ENCODE measurements at regions of chr5 and their contacts with region 1.

Region 1: GRCh38 chr5:126676195-126676624 is 75.5 kb downstream of the PHAX start:
- DNase-seq: no peak
- H3K4me3 ChIP-seq: no peak overlapping the region
- CTCF ChIP-seq: peak; percentile 67

Region 2: DNA sequence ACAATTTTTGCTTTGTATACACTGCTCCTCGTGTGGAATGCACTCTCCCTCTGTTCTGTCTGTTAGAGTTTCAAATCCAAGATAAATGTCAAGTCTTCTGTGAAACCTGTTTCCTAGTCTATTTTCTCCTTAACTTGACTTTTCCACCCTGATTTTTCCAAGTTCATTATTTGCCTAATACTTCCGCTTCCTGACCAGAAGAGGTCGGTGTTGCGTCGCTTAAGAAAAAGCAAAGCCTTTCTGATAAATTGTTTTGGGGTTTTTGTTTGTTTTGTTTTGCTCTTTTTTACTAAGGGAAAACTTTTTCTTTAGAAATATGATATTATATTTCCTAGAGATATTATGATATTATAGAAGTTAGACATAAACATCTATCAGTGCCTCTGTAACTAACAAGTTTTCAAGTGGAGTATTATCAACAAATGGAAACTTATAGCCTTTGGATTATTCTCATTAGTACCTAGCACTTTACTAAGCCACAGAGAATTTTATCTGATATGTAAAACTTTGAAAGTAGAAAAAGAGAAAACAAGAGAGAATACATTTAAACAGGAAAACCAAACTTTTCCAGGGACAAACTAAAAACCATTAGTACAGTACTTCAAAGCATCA is 19.7 kb before region 1 on chr5:
- CTCF ChIA-PET with region 1: interaction called, 47 read pairs
- POLR2A ChIA-PET with region 1: no interaction called
- DNase-seq: no peak
- H3K4me3 ChIP-seq: no peak overlapping the region
- CTCF ChIP-seq: peak; percentile 66

Region 3: GRCh38 chr5:126664586-126664985 is 11.6 kb before region 1 on chr5:
- CTCF ChIA-PET with region 1: interaction called, 47 read pairs
- POLR2A ChIA-PET with region 1: no interaction called
- DNase-seq: no peak
- H3K4me3 ChIP-seq: no peak overlapping the region
- CTCF ChIP-seq: no peak

Region 4: DNA sequence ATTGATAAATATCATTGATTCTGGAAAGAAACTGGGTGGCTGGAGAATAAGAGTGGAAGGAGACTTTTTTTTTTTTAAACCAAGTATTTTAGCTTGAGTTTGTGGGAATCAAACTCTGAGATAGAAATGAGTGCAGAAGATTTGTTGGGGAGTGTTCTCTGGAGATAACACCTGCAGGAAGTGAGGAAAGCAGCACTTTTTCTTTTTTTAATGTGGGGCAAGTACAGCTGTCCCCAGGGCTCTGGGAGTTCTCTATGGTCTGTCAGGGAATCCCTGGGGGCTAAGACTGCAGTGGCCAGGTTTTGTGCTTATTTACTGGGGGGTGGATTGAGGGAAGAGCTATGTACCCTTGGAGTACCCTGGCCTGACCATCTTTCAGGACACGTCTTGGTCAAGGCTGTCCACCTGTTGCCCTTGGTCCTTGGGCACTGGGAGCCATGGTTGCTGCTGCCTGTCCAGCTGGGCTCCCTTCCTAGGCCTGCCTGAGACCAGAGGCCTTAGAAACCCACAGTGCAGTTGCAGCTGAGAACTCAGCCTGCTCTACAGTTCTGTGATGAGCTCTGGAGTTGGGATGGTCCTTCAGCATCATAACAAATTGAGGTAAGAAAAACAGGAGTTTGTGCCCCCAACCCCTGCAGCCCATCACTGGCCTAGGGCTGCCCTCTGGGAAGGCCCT is 10.4 kb after region 1 on chr5:
- CTCF ChIA-PET with region 1: interaction called, 14 read pairs
- POLR2A ChIA-PET with region 1: no interaction called
- DNase-seq: no peak
- H3K4me3 ChIP-seq: no peak overlapping the region
- CTCF ChIP-seq: no peak

Region 5: GRCh38 chr5:126808521-126808988 is 132.3 kb after region 1 on chr5:
- CTCF ChIA-PET with region 1: interaction called, 262 read pairs
- POLR2A ChIA-PET with region 1: no interaction called
- DNase-seq: no peak
- H3K4me3 ChIP-seq: no peak overlapping the region
- CTCF ChIP-seq: peak; percentile 49